Esophagus squamous epithelium (tissue), 5 donors: ENCODE measurements at regions of chr4 and their contacts with region 1.

Region 1: GRCh38 chr4:125735102-125735501 is 420.3 kb downstream of the FAT4 start:
- DNase-seq: no peak
- H3K4me3 ChIP-seq: no peak overlapping the region
- H3K27ac ChIP-seq: no peak overlapping the region
- H3K4me1 ChIP-seq: no peaks in the 10 kb centered on the region
- H3K27me3 ChIP-seq: no peaks in the 10 kb centered on the region
- CTCF ChIP-seq: no peak
- POLR2A ChIP-seq: no peak

Region 2: GRCh38 chr4:125314676-125315575 is 420.2 kb before region 1 on chr4 and contains the start of gene FAT4:
- intact Hi-C with region 1: loop called (anchors 10 kb)
- DNase-seq: peak; percentile 61
- H3K4me3 ChIP-seq: peak within 1 kb of the TSS; percentile 51 to 78 (median 72)
- H3K27ac ChIP-seq: peak within 1 kb of the TSS; percentile 76 to 93 (median 90)
- H3K4me1 ChIP-seq: peaks cover 9 to 65% (median 23%) of the 10 kb centered on the region in 3 donors
- H3K27me3 ChIP-seq: peaks cover 0 to 57% (median 0%) of the 10 kb centered on the region in 4 donors
- CTCF ChIP-seq: peak in 3 of 6 experiments; percentile 4 to 20 (median 11)
- POLR2A ChIP-seq: peak in 2 of 4 donors; percentile 62 to 67
- total RNA-seq, gene FAT4: 0.61 to 18.5 (median 2.8) TPM

Region 3: GRCh38 chr4:125620066-125620860 is 114.8 kb before region 1 on chr4:
- intact Hi-C with region 1: no loop called
- DNase-seq: no peak
- H3K4me3 ChIP-seq: peak overlapping the region in 1 of 4 donors; percentile 6
- H3K27ac ChIP-seq: no peak overlapping the region
- H3K4me1 ChIP-seq: no peaks in the 10 kb centered on the region
- H3K27me3 ChIP-seq: no peaks in the 10 kb centered on the region
- CTCF ChIP-seq: no peak
- POLR2A ChIP-seq: no peak